BJ (cell line): ENCODE measurements at regions of chr17 and their contacts with region 1.

Region 1: DNA sequence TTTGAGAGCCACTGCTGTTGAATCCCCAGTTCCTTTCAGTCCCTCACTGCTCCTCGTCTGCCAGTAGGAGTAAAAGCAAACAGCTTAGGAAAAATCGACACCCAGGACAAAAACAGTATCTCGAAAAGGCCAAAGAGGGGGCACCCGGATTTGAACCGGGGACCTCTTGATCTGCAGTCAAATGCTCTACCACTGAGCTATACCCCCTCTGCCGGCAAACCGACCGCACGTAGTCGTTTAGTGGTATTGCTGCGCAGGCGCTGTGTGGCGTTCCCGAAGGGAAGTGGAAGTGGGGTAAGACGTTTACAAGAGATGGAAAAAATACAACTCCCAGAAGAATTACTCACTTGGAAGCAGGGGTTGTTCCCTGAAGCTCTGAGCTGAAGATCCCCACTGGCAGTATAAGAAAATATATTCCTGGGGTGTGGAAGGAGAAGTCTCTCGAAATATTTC is 2.2 kb upstream of the PLXDC1 start:
- DNase-seq: peak; percentile 43
- H3K4me3 ChIP-seq: peak overlapping the region; percentile 96
- H3K27me3 ChIP-seq: peaks cover 9% of the 10 kb centered on the region
- CTCF ChIP-seq: 0 out of 2 replicates have a peak, but pooled peaks have one; percentile 13

Region 2: DNA sequence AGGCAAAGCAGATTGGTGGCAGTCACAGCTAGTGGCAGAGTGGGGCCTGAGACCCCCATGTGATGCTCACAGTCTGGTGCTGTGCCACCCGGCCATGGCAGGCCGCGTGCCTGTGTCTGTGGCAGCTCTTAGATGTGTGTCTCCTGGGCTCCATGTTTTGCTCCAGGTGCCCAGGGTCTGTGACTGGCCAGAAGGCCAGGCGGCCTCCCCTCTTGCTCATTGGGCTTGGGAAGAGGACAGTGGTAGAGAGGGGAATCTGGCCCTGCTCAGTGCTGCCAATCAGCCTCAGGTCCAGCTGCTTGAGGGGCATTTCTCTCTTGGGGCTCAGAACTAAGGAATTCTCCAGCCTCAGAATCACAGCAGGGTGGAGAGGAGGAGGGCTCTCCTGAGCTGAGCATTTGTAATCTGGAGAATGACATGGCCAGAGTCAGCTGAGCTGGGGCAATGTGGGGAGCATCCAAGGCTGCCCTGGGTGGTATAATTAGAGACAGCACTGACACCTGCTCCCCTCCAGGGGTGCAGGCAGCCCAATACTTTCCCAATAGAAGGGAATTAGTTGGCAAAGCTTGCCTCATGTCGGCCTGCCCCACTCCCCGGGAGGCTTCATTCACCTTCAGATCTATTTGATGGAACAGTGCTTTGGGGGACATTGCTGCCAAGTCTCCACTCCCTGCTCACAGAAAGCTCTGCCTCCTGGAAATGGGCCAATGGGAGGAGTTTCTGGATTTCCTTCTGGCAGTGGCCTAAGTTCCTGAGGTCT is 230.9 kb before region 1 on chr17:
- CTCF ChIA-PET with region 1: interaction called, 14 read pairs
- POLR2A ChIA-PET with region 1: interaction called, 12 read pairs
- DNase-seq: no peak
- H3K4me3 ChIP-seq: no peak overlapping the region
- H3K27me3 ChIP-seq: no peaks in the 10 kb centered on the region
- CTCF ChIP-seq: peak; percentile 20; the same call in 1 of the 2 replicates

Region 3: DNA sequence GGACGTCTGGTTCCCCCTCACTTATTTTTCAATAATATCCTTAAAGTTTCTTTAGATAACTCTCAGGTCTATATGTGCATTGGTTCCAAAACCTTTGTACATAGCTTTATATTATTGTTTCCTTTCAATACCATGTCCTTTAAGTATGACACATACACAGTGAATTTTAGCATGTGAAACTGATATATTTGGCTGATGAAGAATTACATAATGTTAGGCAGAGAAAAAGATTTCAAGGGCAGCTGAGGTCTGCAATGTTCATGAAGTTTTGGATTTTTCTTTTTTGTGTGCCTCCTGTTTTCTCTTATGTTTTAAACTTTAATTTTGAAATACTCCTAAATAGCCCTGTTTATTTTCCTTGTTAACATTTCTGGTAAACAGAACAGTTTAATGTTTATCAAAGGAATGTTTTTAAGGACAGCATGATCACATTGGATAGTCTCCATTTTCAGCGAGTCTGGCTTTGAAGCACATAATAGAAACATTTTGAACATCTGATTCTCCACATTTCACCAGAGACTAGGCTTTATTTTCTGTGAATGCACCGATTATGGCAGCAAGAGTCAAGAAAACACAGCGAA is 153.5 kb before region 1 on chr17:
- CTCF ChIA-PET with region 1: interaction called, 21 read pairs
- POLR2A ChIA-PET with region 1: no interaction called
- DNase-seq: no peak
- H3K4me3 ChIP-seq: no peak overlapping the region
- H3K27me3 ChIP-seq: no peaks in the 10 kb centered on the region
- CTCF ChIP-seq: no peak

Region 4: GRCh38 chr17:39080421-39081078 is 73.1 kb before region 1 on chr17:
- CTCF ChIA-PET with region 1: interaction called, 17 read pairs
- POLR2A ChIA-PET with region 1: no interaction called
- DNase-seq: peak; percentile 5
- H3K4me3 ChIP-seq: no peak overlapping the region
- H3K27me3 ChIP-seq: peaks cover 17% of the 10 kb centered on the region
- CTCF ChIP-seq: no peak

Region 5: DNA sequence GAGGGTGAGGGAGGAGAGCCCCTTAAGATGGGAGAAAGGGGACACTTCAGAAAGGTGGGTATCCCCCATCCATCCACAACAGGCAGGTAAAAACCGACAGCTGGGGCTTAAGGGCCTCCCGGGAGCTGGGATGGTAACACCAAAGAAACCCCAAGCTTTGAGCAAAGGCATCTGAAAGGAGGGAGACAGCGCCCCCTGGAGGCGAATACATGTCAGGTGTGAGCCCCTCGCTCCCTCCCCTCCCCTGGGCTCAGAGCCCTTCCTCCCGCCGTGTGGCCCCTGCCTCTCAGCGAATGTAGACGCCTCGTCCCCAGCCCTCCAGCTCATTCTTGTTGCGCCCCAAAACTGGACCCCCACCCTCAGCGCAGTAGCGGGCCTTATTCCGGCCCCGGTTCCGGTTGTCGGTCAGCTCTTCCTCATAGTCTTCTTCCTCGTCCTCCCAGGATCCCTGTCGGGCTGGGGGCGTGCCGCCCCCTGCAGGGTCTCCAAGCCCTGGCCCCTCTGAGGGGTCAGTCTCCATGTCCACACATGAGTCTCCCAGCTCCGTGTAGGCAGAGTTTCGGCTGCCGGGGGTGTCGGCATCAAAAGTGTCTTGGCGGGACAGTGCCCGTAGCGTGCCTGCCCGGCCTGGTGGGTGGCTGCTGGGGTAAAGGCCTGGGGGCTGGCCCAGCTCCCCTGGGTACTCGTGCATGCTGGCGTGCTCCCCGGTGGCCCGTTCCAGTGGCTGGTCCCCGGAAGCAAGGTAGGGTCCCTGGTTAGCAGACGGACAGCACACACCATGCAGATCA is 21.5 kb after region 1 on chr17:
- CTCF ChIA-PET with region 1: interaction called, 34 read pairs
- POLR2A ChIA-PET with region 1: no interaction called
- DNase-seq: no peak
- H3K4me3 ChIP-seq: no peak overlapping the region
- H3K27me3 ChIP-seq: no peaks in the 10 kb centered on the region
- CTCF ChIP-seq: peak; percentile 87

Region 6: GRCh38 chr17:39209317-39210092 is 55.9 kb after region 1 on chr17:
- CTCF ChIA-PET with region 1: no interaction called
- POLR2A ChIA-PET with region 1: no interaction called
- DNase-seq: no peak
- H3K4me3 ChIP-seq: peak overlapping the region; percentile 36
- H3K27me3 ChIP-seq: no peaks in the 10 kb centered on the region
- CTCF ChIP-seq: no peak

Region 7: GRCh38 chr17:39244600-39245570 is 91.3 kb after region 1 on chr17:
- CTCF ChIA-PET with region 1: interaction called, 13 read pairs
- POLR2A ChIA-PET with region 1: no interaction called
- DNase-seq: no peak
- H3K4me3 ChIP-seq: no peak overlapping the region
- H3K27me3 ChIP-seq: no peaks in the 10 kb centered on the region
- CTCF ChIP-seq: peak; percentile 97

Region 8: GRCh38 chr17:39271546-39271945 is 117.9 kb after region 1 on chr17:
- CTCF ChIA-PET with region 1: no interaction called
- POLR2A ChIA-PET with region 1: no interaction called
- DNase-seq: no peak
- H3K4me3 ChIP-seq: no peak overlapping the region
- H3K27me3 ChIP-seq: no peaks in the 10 kb centered on the region
- CTCF ChIP-seq: no peak